Endothelial cell of umbilical vein (primary cell): ENCODE measurements at regions of chr4 and their contacts with region 1.

Region 1: GRCh38 chr4:10655986-10656385 is 28.6 kb downstream of the CLNK start:
- DNase-seq: peak; percentile 92
- H3K4me3 ChIP-seq: peak overlapping the region in 1 of 3 experiments; percentile 27
- H3K27ac ChIP-seq: peak overlapping the region; percentile 76
- H3K4me1 ChIP-seq: peaks cover 22% of the 10 kb centered on the region
- H3K27me3 ChIP-seq: no peaks in the 10 kb centered on the region
- CTCF ChIP-seq: no peak
- POLR2A ChIP-seq: no peak

Region 2: DNA sequence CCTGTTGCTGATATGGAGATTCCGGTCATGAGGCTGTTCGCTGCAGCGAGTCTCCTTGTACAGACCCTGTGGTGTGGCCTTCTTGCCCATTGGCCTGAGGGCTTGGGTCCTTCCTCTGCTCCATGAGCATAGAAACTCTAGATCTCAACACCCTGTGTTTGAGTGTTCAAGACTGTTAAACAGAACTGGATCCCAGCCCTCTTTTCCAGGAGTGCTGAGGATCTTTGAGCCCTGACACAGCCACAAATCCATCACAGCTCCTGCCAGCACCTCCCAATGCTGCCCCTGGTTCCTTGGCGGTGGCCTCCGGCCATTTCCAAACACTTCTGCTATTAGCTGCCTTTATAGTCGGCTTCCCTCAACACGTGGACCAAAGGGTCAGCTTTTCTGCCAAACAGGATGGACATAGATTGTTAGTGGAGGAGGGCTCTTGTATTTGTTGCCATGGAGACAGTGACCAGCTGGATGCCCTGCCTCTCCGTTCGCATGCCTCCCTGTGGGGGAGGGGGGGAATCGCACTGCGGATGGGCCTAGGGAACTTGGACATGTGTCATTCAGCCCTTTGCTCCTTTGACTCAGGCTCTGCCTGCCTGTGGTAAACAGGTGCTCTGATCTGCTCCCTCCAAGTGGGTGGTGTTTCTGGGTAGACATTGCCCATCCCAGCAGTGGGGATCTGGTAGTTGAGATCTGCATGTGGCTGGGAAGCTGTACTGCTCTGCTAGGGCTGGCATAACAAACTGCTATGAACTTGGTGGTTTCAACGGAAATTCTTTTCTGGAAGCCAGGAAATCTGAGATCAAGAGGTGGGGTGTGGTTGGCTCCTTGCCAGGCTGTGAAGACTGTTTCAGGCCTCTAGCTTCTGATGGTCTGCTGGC is 532.5 kb before region 1 on chr4:
- CTCF ChIA-PET with region 1: no interaction called
- POLR2A ChIA-PET with region 1: no interaction called
- dilution Hi-C with region 1: no loop called
- intact Hi-C with region 1: loop called (anchors 5 kb)
- DNase-seq: peak; percentile 94
- H3K4me3 ChIP-seq: no peak overlapping the region
- H3K27ac ChIP-seq: peak overlapping the region; percentile 66
- H3K4me1 ChIP-seq: peaks cover 22% of the 10 kb centered on the region
- H3K27me3 ChIP-seq: no peaks in the 10 kb centered on the region
- CTCF ChIP-seq: no peak
- POLR2A ChIP-seq: no peak

Region 3: GRCh38 chr4:10554694-10555093 is 101.3 kb before region 1 on chr4:
- CTCF ChIA-PET with region 1: no interaction called
- POLR2A ChIA-PET with region 1: no interaction called
- dilution Hi-C with region 1: no loop called
- intact Hi-C with region 1: no loop called
- DNase-seq: peak; percentile 67
- H3K4me3 ChIP-seq: no peak overlapping the region
- H3K27ac ChIP-seq: no peak overlapping the region
- H3K4me1 ChIP-seq: peaks cover 4% of the 10 kb centered on the region
- H3K27me3 ChIP-seq: peaks cover 9 to 14% of the 10 kb centered on the region in 2 experiments
- CTCF ChIP-seq: peak; percentile 65 to 72
- POLR2A ChIP-seq: no peak

Region 4: GRCh38 chr4:10611673-10612072 is 44.3 kb before region 1 on chr4:
- CTCF ChIA-PET with region 1: no interaction called
- POLR2A ChIA-PET with region 1: no interaction called
- dilution Hi-C with region 1: no loop called
- intact Hi-C with region 1: loop called (anchors 1 kb)
- DNase-seq: peak; percentile 76
- H3K4me3 ChIP-seq: no peak overlapping the region
- H3K27ac ChIP-seq: peak overlapping the region; percentile 64
- H3K4me1 ChIP-seq: peaks cover 12% of the 10 kb centered on the region
- H3K27me3 ChIP-seq: peaks cover 0 to 3% of the 10 kb centered on the region in 2 experiments
- CTCF ChIP-seq: no peak
- POLR2A ChIP-seq: no peak

Region 5: DNA sequence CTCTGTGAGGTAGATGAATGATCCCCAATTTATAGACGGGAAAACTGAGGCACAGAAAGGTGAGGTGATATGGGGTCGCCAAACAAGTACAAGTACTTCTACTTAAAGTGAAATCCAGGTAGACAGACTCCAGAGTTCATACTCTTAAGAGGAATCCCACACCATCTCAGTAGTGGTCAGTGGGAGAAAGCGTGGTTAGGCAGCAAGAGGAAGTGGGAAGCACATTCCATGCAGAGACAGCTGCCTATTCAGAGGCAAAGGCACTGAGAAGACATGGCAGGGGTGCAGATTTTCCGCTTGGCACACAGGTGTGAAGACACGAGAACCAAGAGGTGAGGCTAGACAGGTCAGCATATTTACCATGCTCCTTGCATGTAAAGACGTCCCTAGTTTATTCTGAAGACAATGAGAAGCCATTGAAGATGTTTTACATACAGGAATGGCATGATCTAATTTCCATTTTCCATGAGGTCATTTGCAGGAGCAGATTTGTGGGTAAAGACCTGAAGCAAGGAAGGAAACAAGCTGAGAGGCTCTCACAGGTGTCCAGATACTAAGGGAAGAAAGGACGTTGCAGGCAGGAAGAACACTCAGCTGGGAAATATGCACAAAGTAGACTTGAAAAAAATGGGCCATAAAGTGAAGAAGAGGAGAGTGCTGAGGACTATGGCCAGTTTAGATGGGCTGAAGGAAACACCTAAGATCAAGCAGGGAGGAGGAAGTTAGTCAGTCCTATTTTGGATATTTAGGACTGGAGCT is 45.9 kb after region 1 on chr4:
- CTCF ChIA-PET with region 1: no interaction called
- POLR2A ChIA-PET with region 1: no interaction called
- dilution Hi-C with region 1: no loop called
- intact Hi-C with region 1: loop called (anchors 2 kb)
- DNase-seq: no peak
- H3K4me3 ChIP-seq: no peak overlapping the region
- H3K27ac ChIP-seq: no peak overlapping the region
- H3K4me1 ChIP-seq: no peaks in the 10 kb centered on the region
- H3K27me3 ChIP-seq: no peaks in the 10 kb centered on the region
- CTCF ChIP-seq: no peak
- POLR2A ChIP-seq: no peak

Region 6: DNA sequence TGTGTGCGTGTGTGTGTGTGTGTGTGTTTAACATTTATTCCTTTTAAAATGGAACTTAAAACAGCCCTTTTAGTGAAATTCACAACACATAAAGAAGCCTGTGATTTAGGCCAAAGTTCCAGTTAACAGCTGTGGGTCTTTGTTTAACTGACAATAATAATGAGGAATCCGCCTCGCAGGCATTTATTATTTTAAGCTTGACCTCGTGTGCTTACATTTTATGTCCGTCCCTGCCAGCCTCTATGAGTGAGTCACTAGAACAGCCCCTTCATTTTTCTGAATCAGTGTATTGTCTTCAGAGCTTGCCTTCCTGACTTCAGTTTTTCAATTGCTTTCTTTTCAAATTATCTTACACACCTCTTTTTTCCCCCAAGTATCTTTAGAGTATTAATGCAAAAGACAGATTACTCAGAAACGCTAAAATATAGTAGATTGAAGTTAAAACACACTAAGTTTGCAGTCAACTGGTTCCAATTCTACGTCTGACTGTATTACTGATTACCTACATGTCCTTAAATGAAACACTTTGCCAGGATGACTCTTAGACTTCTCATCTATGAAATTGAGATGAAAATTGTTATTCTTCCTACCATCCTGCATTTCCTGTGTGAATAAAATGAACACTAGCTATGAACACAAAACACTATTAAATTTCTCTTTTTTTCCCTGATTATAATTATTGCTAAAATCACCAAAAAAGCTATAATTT is 1092.3 kb after region 1 on chr4:
- CTCF ChIA-PET with region 1: no interaction called
- POLR2A ChIA-PET with region 1: no interaction called
- dilution Hi-C with region 1: no loop called
- intact Hi-C with region 1: loop called (anchors 10 kb)
- DNase-seq: peak; percentile 96
- H3K4me3 ChIP-seq: peak overlapping the region in 1 of 3 experiments; percentile 48
- H3K27ac ChIP-seq: peak overlapping the region; percentile 85
- H3K4me1 ChIP-seq: peaks cover 48% of the 10 kb centered on the region
- H3K27me3 ChIP-seq: no peaks in the 10 kb centered on the region
- CTCF ChIP-seq: no peak
- POLR2A ChIP-seq: no peak